ENCODE measurements at regions of chr12 and their contacts with region 1.

Region 1: DNA sequence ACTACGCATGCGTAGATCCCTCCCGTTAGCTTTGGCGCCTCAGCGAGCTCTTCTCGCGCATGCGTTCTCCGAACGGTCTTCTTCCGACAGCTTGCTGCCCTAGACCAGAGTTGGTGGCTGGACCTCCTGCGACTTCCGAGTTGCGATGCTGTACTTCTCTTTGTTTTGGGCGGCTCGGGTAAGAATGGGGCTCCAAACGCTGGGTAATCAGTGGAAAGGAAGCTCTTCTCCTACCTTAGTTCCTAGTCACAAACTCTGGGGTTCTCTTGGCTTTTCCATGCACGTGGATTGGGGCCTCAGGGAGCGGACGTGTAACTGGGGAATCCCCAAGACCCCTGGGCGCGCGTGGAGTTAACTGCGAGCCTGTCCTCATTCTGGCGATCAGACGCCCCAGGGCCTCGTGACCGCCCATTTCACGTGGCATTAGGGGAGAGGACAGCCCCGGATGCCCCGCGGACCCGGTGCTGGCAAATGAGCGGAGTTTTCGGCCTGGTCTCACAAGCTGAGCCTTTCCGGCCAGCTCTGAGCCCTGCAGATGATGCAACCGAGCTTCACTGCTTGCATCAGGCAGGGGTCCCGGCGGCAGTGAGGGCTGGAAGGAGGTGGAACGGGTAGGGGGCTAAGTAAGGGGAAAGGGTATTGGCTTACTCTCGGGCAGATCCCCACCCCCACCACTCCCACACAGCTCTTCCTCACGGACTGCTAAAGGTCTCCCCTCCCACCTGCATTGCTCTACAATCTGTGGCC is at the start of gene SHMT2:
- DNase-seq: peak; percentile 91 to 94
- H3K4me3 ChIP-seq: peak within 1 kb of the TSS; percentile 69 to 93 (median 81)
- H3K27ac ChIP-seq: peak within 1 kb of the TSS; percentile 85
- H3K4me1 ChIP-seq: peaks cover 4 to 43% (median 21%) of the 10 kb centered on the region in 4 experiments
- H3K27me3 ChIP-seq: peaks cover 11 to 32% (median 26%) of the 10 kb centered on the region in 4 experiments
- CTCF ChIP-seq: no peak
- EP300 ChIP-seq: 0 out of 3 replicates have a peak, but pooled peaks of 1 of the 2 experiments have one; percentile 37
- POLR2A ChIP-seq: peak in 1 of 2 experiments; percentile 68; a peak in 2 of 3 replicates
- RAD21 ChIP-seq: no peak
- total RNA-seq, gene SHMT2: 274 and 283 TPM in 2 replicates

Region 2: GRCh38 chr12:57135527-57136326 is 94.1 kb before region 1 on chr12:
- CTCF ChIA-PET with region 1: no interaction called
- POLR2A ChIA-PET with region 1: interaction called, 16 read pairs
- DNase-seq: no peak
- H3K4me3 ChIP-seq: peak overlapping the region in 1 of 4 experiments; percentile 47; a peak in 4 of 8 replicates
- H3K27ac ChIP-seq: peak overlapping the region; percentile 78
- H3K4me1 ChIP-seq: peaks cover 22 to 53% (median 30%) of the 10 kb centered on the region in 4 experiments
- H3K27me3 ChIP-seq: no peaks in the 10 kb centered on the region
- CTCF ChIP-seq: no peak
- EP300 ChIP-seq: no peak
- POLR2A ChIP-seq: no peak; a peak in 1 of 3 replicates
- RAD21 ChIP-seq: no peak

Region 3: GRCh38 chr12:57182921-57183790 is 46.7 kb before region 1 on chr12:
- CTCF ChIA-PET with region 1: interaction called, 4 read pairs
- POLR2A ChIA-PET with region 1: interaction called, 19 read pairs
- DNase-seq: peak; percentile 54 to 97
- H3K4me3 ChIP-seq: no peak overlapping the region
- H3K27ac ChIP-seq: no peak overlapping the region
- H3K4me1 ChIP-seq: no peaks in the 10 kb centered on the region; a peak in 1 of 7 replicates
- H3K27me3 ChIP-seq: no peaks in the 10 kb centered on the region
- CTCF ChIP-seq: peak in 2 of 3 experiments; percentile 82 to 96; a peak in 3 of 4 replicates
- EP300 ChIP-seq: no peak
- POLR2A ChIP-seq: no peak
- RAD21 ChIP-seq: peak; percentile 71 to 76

Region 4: GRCh38 chr12:57190037-57190436 is 39.8 kb before region 1 on chr12:
- CTCF ChIA-PET with region 1: interaction called, 3 read pairs
- POLR2A ChIA-PET with region 1: interaction called, 19 read pairs
- DNase-seq: no peak
- H3K4me3 ChIP-seq: no peak overlapping the region
- H3K27ac ChIP-seq: no peak overlapping the region
- H3K4me1 ChIP-seq: no peaks in the 10 kb centered on the region; a peak in 1 of 7 replicates
- H3K27me3 ChIP-seq: no peaks in the 10 kb centered on the region
- CTCF ChIP-seq: no peak
- EP300 ChIP-seq: no peak
- POLR2A ChIP-seq: no peak
- RAD21 ChIP-seq: no peak

Region 5: DNA sequence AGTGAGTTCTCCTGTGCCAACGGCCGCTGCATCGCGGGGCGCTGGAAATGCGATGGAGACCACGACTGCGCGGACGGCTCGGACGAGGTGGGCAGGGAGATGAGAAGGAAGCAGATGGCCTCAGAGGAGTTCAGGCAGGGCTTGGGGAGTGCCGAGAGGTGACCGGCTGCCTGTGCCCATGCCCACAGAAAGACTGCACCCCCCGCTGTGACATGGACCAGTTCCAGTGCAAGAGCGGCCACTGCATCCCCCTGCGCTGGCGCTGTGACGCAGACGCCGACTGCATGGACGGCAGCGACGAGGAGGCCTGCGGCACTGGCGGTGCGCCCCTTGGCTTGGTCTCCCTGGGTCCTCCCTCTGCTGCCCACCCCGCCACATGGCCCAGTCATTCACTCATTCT is 26.6 kb before region 1 on chr12:
- CTCF ChIA-PET with region 1: interaction called, 3 read pairs
- POLR2A ChIA-PET with region 1: interaction called, 51 read pairs
- DNase-seq: no peak
- H3K4me3 ChIP-seq: no peak overlapping the region
- H3K27ac ChIP-seq: no peak overlapping the region
- H3K4me1 ChIP-seq: no peaks in the 10 kb centered on the region
- H3K27me3 ChIP-seq: no peaks in the 10 kb centered on the region
- CTCF ChIP-seq: no peak
- EP300 ChIP-seq: no peak
- POLR2A ChIP-seq: no peak
- RAD21 ChIP-seq: no peak

Region 6: DNA sequence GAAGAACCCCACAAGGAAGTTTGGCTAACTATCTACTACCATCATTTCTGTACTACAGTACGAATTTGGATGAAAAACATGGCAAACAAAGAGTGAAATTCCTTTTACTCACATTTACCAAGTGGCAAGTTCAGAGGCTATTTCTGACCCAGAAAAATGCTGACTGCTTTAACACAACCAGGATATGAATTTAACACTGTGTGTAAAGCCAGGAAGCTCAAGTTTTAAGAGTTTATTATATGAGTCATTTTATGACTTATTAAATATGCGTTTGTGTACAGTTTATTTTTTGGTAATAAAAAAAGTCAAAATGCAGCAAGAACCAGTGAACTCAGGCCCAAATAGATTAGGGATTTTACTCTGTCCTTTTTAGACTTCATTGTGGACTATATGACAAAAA is 79.6 kb after region 1 on chr12:
- CTCF ChIA-PET with region 1: no interaction called
- POLR2A ChIA-PET with region 1: no interaction called
- DNase-seq: no peak
- H3K4me3 ChIP-seq: no peak overlapping the region
- H3K27ac ChIP-seq: no peak overlapping the region
- H3K4me1 ChIP-seq: no peaks in the 10 kb centered on the region
- H3K27me3 ChIP-seq: no peaks in the 10 kb centered on the region
- CTCF ChIP-seq: no peak
- EP300 ChIP-seq: no peak
- POLR2A ChIP-seq: no peak
- RAD21 ChIP-seq: no peak

Measured in H1 (cell line).